ENCODE measurements at regions of chr13 and their contacts with region 1.

Region 1: DNA sequence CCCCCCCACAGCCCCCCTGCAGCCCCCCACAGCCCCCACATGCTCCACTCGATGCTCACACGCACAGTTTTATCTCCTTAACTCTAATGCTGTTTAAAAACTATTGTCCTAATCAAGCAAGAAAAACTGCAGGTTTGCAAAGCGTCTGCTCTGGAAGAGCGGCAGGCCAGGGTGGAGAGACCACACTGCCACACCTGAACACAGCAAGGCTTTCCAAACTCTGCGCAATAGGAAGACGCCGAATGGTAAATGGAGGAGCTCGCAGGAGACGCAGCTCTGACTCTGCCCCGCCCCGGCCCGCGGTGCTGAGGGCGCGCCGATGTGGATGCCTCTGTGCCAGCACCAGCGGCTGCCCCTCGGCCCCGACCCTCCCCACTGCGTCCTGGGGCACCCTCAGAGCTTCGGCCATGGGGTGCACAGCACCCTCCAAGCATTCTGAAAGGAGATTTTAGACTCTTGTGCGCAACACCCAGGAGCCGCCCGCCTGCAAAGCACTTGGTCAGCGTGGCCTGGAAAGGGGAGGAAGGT is 32.4 kb downstream of the RASA3 start:
- DNase-seq: no peak

Region 2: GRCh38 chr13:114114006-114114405 is 14.0 kb after region 1 on chr13:
- intact Hi-C with region 1: loop called in 1 of 2 experiments (anchors 1 kb)
- DNase-seq: peak; percentile 34

Region 3: DNA sequence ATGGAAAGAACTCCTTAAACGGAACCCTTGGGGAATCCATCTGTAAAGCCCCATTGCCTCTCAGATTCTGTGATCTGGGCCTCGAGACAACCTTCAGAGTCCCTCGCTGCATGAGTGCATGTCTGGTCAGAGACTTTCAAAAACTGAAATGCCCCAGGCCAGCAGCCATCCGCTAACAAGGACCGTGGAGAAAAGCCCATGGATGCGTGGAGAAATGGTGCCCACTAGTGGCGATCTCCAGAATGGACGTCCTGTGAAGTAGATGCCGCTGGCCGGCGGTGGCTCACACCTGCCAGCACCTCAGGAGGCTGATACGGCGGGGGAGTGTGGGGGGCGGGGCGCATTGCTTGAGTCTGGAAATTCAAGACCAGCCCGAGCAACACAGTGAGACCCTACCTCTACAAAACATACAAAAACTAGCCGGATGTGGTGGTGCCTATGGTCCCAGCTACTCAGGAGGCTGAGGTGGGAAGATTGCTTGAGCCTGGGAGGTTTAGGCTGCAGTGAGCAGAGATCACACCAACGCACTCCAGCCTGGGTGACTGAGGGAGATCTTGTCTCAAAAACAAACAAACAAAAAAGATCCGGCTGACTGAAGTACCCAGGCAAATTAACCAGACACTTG is 126.8 kb after region 1 on chr13:
- intact Hi-C with region 1: no loop called
- DNase-seq: peak; percentile 94

Measured in posterior vena cava (tissue), 2 donors.